Psoas muscle (tissue), 8 donors: ENCODE measurements at regions of chr15 and their contacts with region 1.

Region 1: DNA sequence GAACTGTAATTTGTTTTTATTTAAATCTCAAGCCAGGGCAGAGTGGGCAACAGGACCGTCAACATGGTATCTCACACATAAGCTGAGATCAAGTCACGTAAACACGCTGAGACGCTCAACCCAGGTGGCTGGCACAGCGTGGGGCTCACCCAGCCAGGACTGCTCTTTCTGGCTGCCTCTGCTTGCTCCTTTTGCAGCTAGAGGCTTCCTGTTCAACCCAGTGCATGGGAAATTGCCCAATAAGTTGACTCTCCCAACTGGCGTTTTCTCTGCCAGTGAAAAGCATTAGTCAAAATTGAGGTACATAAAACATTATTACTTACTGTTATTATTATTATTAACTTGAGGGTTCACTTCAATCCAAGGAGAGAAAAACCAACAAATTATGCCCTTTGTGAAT is 398.1 kb downstream of the NR2F2 start:
- DNase-seq: no peak
- ATAC-seq: no peak
- H3K4me3 ChIP-seq: no peak overlapping the region
- H3K27ac ChIP-seq: no peak overlapping the region
- H3K4me1 ChIP-seq: no peaks in the 10 kb centered on the region
- H3K27me3 ChIP-seq: peaks cover 0 to 2% (median 0%) of the 10 kb centered on the region in 3 donors
- CTCF ChIP-seq: no peak

Region 2: GRCh38 chr15:96750361-96750760 is 21.8 kb after region 1 on chr15:
- intact Hi-C with region 1: loop called in 1 of 2 experiments (anchors 2 kb)
- DNase-seq: no peak
- ATAC-seq: no peak
- H3K4me3 ChIP-seq: no peak overlapping the region
- H3K27ac ChIP-seq: no peak overlapping the region
- H3K4me1 ChIP-seq: no peaks in the 10 kb centered on the region
- H3K27me3 ChIP-seq: peaks cover 0 to 2% (median under 1%) of the 10 kb centered on the region in 3 donors
- CTCF ChIP-seq: no peak